Activated T-helper 1 cell treated with anti-CD3 and anti-CD28 coated beads, Interleukin-12 subunit alpha, Interleukin-12 subunit beta, Interleukin-2, Interleukin-4 antibody, amounts not matched to agents 30 ng/mL and 10 ng/mL and 1 ng/mL, durations not matched to agents 14 hours and 24 hours and 36 hours (primary cell): ENCODE measurements at regions of chr21 and their contacts with region 1.

Region 1: GRCh38 chr21:32494934-32495703 is 82.6 kb downstream of the EVA1C start:
- DNase-seq: no peak
- H3K4me3 Mint-ChIP-seq: no peak overlapping the region
- H3K27ac Mint-ChIP-seq: no peak overlapping the region
- H3K4me1 Mint-ChIP-seq: peaks cover 16% of the 10 kb centered on the region
- H3K27me3 Mint-ChIP-seq: no peaks in the 10 kb centered on the region

Region 2: DNA sequence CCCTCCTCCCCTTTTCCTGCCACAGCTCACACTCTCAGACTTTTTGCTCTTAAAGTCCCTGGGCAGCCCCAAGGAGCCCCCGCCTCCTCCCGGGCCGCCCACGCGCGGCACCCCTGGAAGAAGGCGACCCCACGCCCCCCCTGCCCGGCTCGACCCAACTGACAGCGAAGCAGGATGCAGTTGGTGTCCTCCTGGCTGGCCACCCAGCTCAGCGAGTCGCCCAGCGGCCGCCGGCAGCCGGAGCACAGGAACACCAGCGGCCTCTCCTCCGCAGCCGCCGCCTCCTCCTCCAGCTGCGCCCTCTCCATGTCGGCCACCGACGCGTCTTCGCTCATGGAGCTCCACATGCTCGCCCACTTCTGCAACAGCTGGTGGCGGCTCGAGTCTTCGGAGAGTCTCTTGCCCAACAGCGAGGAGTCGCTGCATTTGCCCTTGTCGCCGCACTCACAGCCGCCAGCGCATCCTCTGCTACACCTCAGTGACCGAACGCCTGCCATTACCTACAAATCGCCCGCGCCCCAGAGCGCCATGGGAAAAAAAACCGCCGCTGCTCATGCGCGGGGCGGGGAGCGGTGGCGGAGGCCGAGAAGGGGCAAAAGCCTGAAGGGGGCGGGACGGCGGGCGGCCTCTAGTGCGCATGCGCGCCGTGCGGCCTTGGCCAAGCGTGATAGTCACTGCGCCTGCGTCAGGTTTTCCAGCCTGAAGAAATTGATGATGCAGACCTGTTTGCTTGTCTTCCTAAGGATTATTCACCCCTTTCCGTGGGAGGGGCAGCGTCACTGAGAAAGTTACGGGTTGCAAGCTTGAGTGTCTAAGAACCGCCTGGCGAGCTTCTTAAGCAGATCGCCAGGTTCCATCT is 216.4 kb before region 1 on chr21 and contains the start of gene MIS18A:
- intact Hi-C with region 1: loop called (anchors 2 kb)
- DNase-seq: peak; percentile 95
- H3K4me3 Mint-ChIP-seq: peak within 1 kb of the TSS; percentile 100
- H3K27ac Mint-ChIP-seq: peak within 1 kb of the TSS; percentile 97
- H3K4me1 Mint-ChIP-seq: peaks cover 21% of the 10 kb centered on the region
- H3K27me3 Mint-ChIP-seq: no peaks in the 10 kb centered on the region
- total RNA-seq, gene MIS18A: 26.8 and 27.5 TPM in 2 replicates

Region 3: GRCh38 chr21:32412162-32413014 is 82.7 kb before region 1 on chr21 and contains the start of gene EVA1C:
- intact Hi-C with region 1: loop called (anchors 1 kb)
- DNase-seq: peak; percentile 39
- H3K4me3 Mint-ChIP-seq: peak within 1 kb of the TSS; percentile 94
- H3K27ac Mint-ChIP-seq: peak within 1 kb of the TSS; percentile 87
- H3K4me1 Mint-ChIP-seq: peaks cover 33% of the 10 kb centered on the region
- H3K27me3 Mint-ChIP-seq: peaks cover 12% of the 10 kb centered on the region
- total RNA-seq, gene EVA1C: 6.2 and 7.6 TPM in 2 replicates

Region 4: GRCh38 chr21:32569261-32570230 is 74.4 kb after region 1 on chr21:
- intact Hi-C with region 1: loop called (anchors 2 kb)
- DNase-seq: peak; percentile 67
- H3K4me3 Mint-ChIP-seq: peak overlapping the region; percentile 88
- H3K27ac Mint-ChIP-seq: peak overlapping the region; percentile 57
- H3K4me1 Mint-ChIP-seq: peaks cover 21% of the 10 kb centered on the region
- H3K27me3 Mint-ChIP-seq: peaks cover 12% of the 10 kb centered on the region

Region 5: GRCh38 chr21:33229784-33230544 is 734.8 kb after region 1 on chr21 and contains the start of gene IFNAR2:
- intact Hi-C with region 1: loop called (anchors 5 kb)
- DNase-seq: peak; percentile 68
- H3K4me3 Mint-ChIP-seq: peak within 1 kb of the TSS; percentile 88
- H3K27ac Mint-ChIP-seq: peak within 1 kb of the TSS; percentile 87
- H3K4me1 Mint-ChIP-seq: peaks cover 49% of the 10 kb centered on the region
- H3K27me3 Mint-ChIP-seq: peaks cover 5% of the 10 kb centered on the region
- total RNA-seq, gene IFNAR2: 33.3 and 33.5 TPM in 2 replicates